ENCODE measurements at regions of chr1 and their contacts with region 1.

Region 1: DNA sequence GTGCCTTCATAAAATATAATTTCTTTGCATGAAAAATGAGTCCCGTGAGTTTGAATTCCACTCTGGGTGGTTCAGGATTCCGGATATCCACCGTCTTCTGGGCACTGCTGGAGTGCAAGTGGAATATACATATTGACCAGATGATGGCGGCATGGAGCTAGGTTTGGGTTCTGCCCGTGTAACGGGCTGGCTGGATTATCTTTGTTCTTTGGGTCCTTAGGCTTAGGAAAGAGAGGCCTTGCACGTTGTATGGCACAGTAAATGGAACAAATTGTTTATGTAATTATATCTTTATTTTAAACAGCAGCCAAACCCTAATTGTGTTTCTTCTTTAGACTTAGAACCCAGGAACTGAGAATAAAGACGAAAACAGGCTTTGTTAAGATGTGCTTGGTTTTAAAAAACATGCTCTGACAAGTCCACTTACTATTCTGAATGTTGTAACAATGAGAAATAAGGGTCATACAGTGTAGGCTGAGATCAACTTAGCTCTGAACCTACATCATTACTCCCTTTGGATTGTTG is 13.5 kb upstream of the ACBD6 start:
- DNase-seq: peak; percentile 41 to 48
- ATAC-seq: peak; percentile 96 to 100
- H3K4me3 ChIP-seq: no peak overlapping the region
- H3K27ac ChIP-seq: no peak overlapping the region
- H3K4me1 ChIP-seq: peaks cover 3 to 7% of the 10 kb centered on the region in 2 donors
- H3K27me3 ChIP-seq: no peaks in the 10 kb centered on the region
- CTCF ChIP-seq: peak; percentile 64 to 81 (median 80)
- POLR2A ChIP-seq: no peak

Region 2: GRCh38 chr1:180623579-180624347 is 107.8 kb after region 1 on chr1:
- in situ Hi-C with region 1: loop called in 1 of 4 experiments (anchors 10 kb)
- intact Hi-C with region 1: no loop called
- DNase-seq: no peak
- ATAC-seq: no peak
- H3K4me3 ChIP-seq: no peak overlapping the region
- H3K27ac ChIP-seq: no peak overlapping the region
- H3K4me1 ChIP-seq: no peaks in the 10 kb centered on the region
- H3K27me3 ChIP-seq: no peaks in the 10 kb centered on the region
- CTCF ChIP-seq: no peak
- POLR2A ChIP-seq: no peak

Region 3: GRCh38 chr1:180851995-180852887 is 336.3 kb after region 1 on chr1:
- in situ Hi-C with region 1: loop called in 2 of 4 experiments (anchors 5 to 10 kb)
- intact Hi-C with region 1: no loop called
- DNase-seq: no peak
- ATAC-seq: no peak
- H3K4me3 ChIP-seq: no peak overlapping the region
- H3K27ac ChIP-seq: no peak overlapping the region
- H3K4me1 ChIP-seq: no peaks in the 10 kb centered on the region
- H3K27me3 ChIP-seq: no peaks in the 10 kb centered on the region
- CTCF ChIP-seq: no peak
- POLR2A ChIP-seq: no peak

Region 4: DNA sequence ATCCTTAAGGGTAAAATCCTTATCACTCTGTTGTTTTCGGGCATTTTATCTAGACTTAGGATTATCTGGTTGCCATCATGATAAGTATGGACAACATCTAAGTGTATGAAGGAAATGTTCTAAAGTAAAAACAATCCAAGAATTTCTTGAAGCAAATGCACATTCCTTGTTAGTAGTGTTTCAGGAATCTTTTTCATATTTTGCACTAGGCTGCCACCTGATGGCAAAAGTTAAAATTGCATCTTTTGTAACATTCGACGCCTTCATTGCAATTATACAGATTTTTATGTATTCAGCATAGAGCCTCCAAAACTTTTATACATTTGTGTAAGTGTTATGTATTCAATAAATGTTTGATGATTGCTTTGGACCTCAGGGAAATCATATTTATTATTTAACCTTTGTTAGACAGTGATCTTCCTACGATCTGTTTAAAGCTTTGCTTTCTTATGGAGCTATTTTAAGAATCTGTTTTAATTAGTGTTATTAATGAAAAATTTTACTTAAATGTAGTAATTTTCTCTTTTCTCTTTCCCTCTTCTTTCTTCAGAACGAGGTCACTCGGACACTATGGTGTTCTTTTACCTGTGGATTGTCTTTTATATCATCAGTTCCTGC is 347.3 kb after region 1 on chr1:
- in situ Hi-C with region 1: loop called (anchors 5 to 10 kb)
- intact Hi-C with region 1: loop called (anchors 5 kb)
- DNase-seq: no peak
- ATAC-seq: no peak
- H3K4me3 ChIP-seq: no peak overlapping the region
- H3K27ac ChIP-seq: no peak overlapping the region
- H3K4me1 ChIP-seq: no peaks in the 10 kb centered on the region
- H3K27me3 ChIP-seq: no peaks in the 10 kb centered on the region
- CTCF ChIP-seq: peak; percentile 58 to 81 (median 72)
- POLR2A ChIP-seq: no peak

Measured in gastrocnemius medialis (tissue), 4 donors.